ENCODE measurements at regions of chr3 and their contacts with region 1.

Region 1: DNA sequence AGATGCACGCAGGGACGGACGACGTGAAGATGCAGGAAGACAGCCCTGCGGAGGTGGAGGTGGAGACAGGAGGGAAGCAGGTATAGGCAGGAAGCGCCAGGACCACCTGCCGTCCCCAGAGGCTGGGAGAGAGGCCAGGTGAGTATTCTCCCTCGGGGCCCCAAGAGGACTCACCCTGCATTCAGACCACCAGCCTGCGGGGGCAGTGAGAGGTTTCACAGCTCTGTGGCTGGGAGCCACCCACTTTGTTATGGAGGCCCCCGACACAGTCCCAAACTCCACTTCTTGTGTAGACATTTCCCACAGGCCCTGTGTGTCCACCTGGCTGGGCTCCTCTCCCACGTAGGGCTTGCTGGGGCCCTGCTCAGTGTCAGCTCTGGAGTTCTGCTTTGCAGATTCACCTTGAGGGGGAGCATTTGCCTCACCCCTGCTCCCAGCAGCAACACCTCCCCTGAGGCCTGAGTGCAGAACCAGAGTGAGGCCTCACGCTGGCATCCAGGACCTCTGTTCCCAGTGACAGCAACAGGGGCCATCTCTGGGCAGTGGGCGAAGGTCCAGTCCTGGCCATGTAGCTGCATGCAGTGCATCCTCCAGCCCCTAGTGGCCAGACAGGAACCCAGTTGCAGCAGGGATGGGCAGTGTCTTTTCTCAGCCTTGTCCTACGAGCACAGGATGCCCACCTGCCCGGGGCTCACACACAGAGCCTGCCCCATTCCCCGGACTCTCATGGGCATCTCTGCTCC is 119.4 kb upstream of the IQSEC1 start:
- DNase-seq: peak; percentile 54
- ATAC-seq: peak; percentile 61
- H3K4me3 Mint-ChIP-seq: no peak overlapping the region
- H3K27ac Mint-ChIP-seq: no peak overlapping the region
- H3K4me1 Mint-ChIP-seq: peaks cover 27% of the 10 kb centered on the region
- H3K27me3 Mint-ChIP-seq: no peaks in the 10 kb centered on the region
- CTCF ChIP-seq: peak; percentile 41; the same call in 1 of the 2 replicates

Region 2: DNA sequence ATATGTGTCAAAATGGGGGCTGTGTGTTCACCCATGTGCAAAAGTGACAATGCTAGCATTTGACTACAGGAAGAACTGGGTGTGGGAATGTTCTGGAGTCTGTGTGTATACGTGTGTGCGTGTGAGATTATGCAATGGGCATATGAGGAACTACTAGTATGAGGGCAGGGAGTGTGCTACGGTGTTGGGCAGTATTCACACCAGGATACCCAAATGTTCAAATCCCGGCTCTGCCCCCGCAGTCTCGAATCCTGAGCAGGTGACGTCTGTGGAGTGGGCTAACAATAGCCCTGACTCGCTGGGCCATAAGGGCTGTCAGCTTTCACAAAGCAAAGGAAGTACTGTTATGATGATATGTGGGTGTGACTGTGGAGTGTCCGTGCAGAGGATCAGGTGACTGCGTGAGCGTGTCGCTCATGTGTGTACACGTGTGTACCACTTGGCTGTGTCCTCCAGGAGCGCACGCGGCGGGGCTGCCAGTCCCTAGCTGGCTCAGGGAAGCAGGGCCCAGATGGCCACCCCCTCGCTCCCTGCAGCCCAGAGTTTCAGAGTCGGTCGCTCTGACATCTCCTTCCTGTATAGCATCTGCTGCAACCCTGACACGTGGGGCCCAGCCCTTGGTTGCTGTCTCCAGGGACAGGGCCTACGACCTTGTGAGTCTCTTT is 146.6 kb before region 1 on chr3:
- CTCF ChIA-PET with region 1: no interaction called
- POLR2A ChIA-PET with region 1: no interaction called
- DNase-seq: no peak
- ATAC-seq: no peak
- H3K4me3 Mint-ChIP-seq: no peak overlapping the region
- H3K27ac Mint-ChIP-seq: 0 out of 2 replicates have a peak overlapping the region, but pooled peaks have one; percentile 16
- H3K4me1 Mint-ChIP-seq: peaks cover 7% of the 10 kb centered on the region
- H3K27me3 Mint-ChIP-seq: no peaks in the 10 kb centered on the region
- CTCF ChIP-seq: no peak

Region 3: GRCh38 chr3:13141991-13142412 is 50.6 kb before region 1 on chr3:
- CTCF ChIA-PET with region 1: interaction called, 11 read pairs
- POLR2A ChIA-PET with region 1: no interaction called
- DNase-seq: peak; percentile 84
- ATAC-seq: peak; percentile 92
- H3K4me3 Mint-ChIP-seq: no peak overlapping the region
- H3K27ac Mint-ChIP-seq: no peak overlapping the region
- H3K4me1 Mint-ChIP-seq: peaks cover 6% of the 10 kb centered on the region
- H3K27me3 Mint-ChIP-seq: no peaks in the 10 kb centered on the region
- CTCF ChIP-seq: no peak

Region 4: GRCh38 chr3:13161024-13161759 is 31.4 kb before region 1 on chr3:
- CTCF ChIA-PET with region 1: interaction called, 20 read pairs
- POLR2A ChIA-PET with region 1: no interaction called
- DNase-seq: no peak
- ATAC-seq: no peak
- H3K4me3 Mint-ChIP-seq: no peak overlapping the region
- H3K27ac Mint-ChIP-seq: no peak overlapping the region
- H3K4me1 Mint-ChIP-seq: peaks cover 68% of the 10 kb centered on the region
- H3K27me3 Mint-ChIP-seq: no peaks in the 10 kb centered on the region
- CTCF ChIP-seq: no peak

Measured in WTC11 (cell line).